Activated naive CD4-positive, alpha-beta T cell treated with anti-CD3 and anti-CD28 coated beads for 36 hours (primary cell): ENCODE measurements at regions of chr17 and their contacts with region 1.

Region 1: GRCh38 chr17:65556014-65556909 is 5.2 kb downstream of the AXIN2 start:
- DNase-seq: peak; percentile 95
- H3K4me3 Mint-ChIP-seq: no peak overlapping the region
- H3K27ac Mint-ChIP-seq: no peak overlapping the region
- H3K4me1 Mint-ChIP-seq: peaks cover 35% of the 10 kb centered on the region
- H3K27me3 Mint-ChIP-seq: peaks cover 2% of the 10 kb centered on the region

Region 2: GRCh38 chr17:65261682-65262636 is 294.3 kb before region 1 on chr17:
- CTCF ChIA-PET with region 1: no interaction called
- intact Hi-C with region 1: loop called (anchors 5 kb)
- DNase-seq: no peak
- H3K4me3 Mint-ChIP-seq: no peak overlapping the region
- H3K27ac Mint-ChIP-seq: no peak overlapping the region
- H3K4me1 Mint-ChIP-seq: peaks cover 22% of the 10 kb centered on the region
- H3K27me3 Mint-ChIP-seq: peaks cover 11% of the 10 kb centered on the region

Region 3: GRCh38 chr17:65418628-65419027 is 137.6 kb before region 1 on chr17:
- CTCF ChIA-PET with region 1: no interaction called
- intact Hi-C with region 1: loop called (anchors 2 kb)
- DNase-seq: peak; percentile 11
- H3K4me3 Mint-ChIP-seq: no peak overlapping the region
- H3K27ac Mint-ChIP-seq: no peak overlapping the region
- H3K4me1 Mint-ChIP-seq: peaks cover 2% of the 10 kb centered on the region
- H3K27me3 Mint-ChIP-seq: no peaks in the 10 kb centered on the region

Region 4: DNA sequence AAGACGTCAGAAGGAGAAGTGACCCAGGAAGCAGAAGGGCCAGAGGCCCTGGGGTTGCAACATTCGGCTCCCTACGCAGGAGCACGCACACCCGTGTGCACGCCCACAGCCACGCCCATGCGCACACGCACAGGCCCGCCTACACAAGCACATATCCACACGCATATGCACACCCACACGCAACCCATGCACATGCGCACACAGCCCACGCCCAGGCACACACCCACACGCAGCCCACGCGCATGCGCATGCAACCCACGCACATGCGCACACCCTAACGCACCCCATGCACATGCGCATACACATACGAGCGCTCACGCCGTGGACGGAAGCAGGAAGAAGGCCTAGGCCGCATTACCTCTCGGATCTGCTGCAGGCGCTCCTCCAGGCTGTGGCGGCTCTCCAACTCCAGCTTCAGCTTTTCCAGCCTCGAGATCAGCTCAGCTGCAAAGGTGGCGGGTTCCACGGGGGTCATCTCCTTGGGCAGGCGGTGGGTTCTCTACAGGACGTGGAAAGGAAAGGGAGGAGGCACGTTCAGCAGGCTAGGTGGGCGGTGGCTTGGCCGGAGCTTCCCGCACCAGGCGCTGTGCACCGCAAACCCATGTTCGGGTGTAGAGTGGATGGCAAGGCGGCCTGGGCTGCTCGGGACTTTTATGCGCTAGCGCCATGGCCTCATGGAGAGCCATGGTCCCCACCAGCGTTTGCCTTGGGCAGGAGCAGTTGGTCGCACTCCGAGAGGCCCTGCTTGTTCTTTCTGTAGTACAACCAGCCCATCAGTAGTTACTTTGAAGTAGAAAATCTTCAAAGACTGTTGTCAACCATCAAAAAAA is 18.2 kb before region 1 on chr17:
- CTCF ChIA-PET with region 1: interaction called, 8 read pairs
- intact Hi-C with region 1: loop called (anchors 2 kb)
- DNase-seq: no peak
- H3K4me3 Mint-ChIP-seq: peak overlapping the region; percentile 63
- H3K27ac Mint-ChIP-seq: no peak overlapping the region
- H3K4me1 Mint-ChIP-seq: peaks cover 33% of the 10 kb centered on the region
- H3K27me3 Mint-ChIP-seq: no peaks in the 10 kb centered on the region

Region 5: GRCh38 chr17:65742403-65743307 is 186.4 kb after region 1 on chr17:
- CTCF ChIA-PET with region 1: no interaction called
- intact Hi-C with region 1: loop called (anchors 2 kb)
- DNase-seq: peak; percentile 14
- H3K4me3 Mint-ChIP-seq: no peak overlapping the region
- H3K27ac Mint-ChIP-seq: peak overlapping the region; percentile 39
- H3K4me1 Mint-ChIP-seq: peaks cover 22% of the 10 kb centered on the region
- H3K27me3 Mint-ChIP-seq: no peaks in the 10 kb centered on the region